ENCODE measurements at regions of chr17 and their contacts with region 1.

Region 1: GRCh38 chr17:49434821-49435670 is 20.4 kb upstream of the PHB1 start:
- DNase-seq: peak; percentile 92
- H3K4me3 ChIP-seq: no peak overlapping the region
- H3K27ac ChIP-seq: peak overlapping the region in 1 of 2 experiments; percentile 81; a peak in 2 of 4 replicates
- H3K4me1 ChIP-seq: peaks cover 3 to 39% of the 10 kb centered on the region in 2 experiments; a peak in 2 of 4 replicates
- H3K27me3 ChIP-seq: peaks cover 16% of the 10 kb centered on the region; the same call in 1 of the 2 replicates
- CTCF ChIP-seq: peak; percentile 77
- EP300 ChIP-seq: no peak
- RAD21 ChIP-seq: peak; percentile 86

Region 2: GRCh38 chr17:49146620-49147306 is 288.3 kb before region 1 on chr17:
- CTCF ChIA-PET with region 1: no interaction called
- POLR2A ChIA-PET with region 1: no interaction called
- DNase-seq: no peak
- H3K4me3 ChIP-seq: no peak overlapping the region
- H3K27ac ChIP-seq: peak overlapping the region in 1 of 2 experiments; percentile 73; a peak in 2 of 4 replicates
- H3K4me1 ChIP-seq: peaks cover 0 to 9% of the 10 kb centered on the region in 2 experiments; a peak in 1 of 4 replicates
- H3K27me3 ChIP-seq: peaks cover 34% of the 10 kb centered on the region
- CTCF ChIP-seq: no peak
- EP300 ChIP-seq: peak in 1 of 2 experiments; percentile 85; a peak in 2 of 4 replicates
- RAD21 ChIP-seq: no peak

Region 3: GRCh38 chr17:49315551-49316257 is 119.3 kb before region 1 on chr17:
- CTCF ChIA-PET with region 1: interaction called, 17 read pairs
- POLR2A ChIA-PET with region 1: no interaction called
- DNase-seq: peak; percentile 77
- H3K4me3 ChIP-seq: peak overlapping the region in 1 of 2 experiments; percentile 9; a peak in 1 of 4 replicates
- H3K27ac ChIP-seq: peak overlapping the region; percentile 11 to 59; a peak in 3 of 4 replicates
- H3K4me1 ChIP-seq: peaks cover 0 to 8% of the 10 kb centered on the region in 2 experiments
- H3K27me3 ChIP-seq: no peaks in the 10 kb centered on the region
- CTCF ChIP-seq: peak; percentile 100
- EP300 ChIP-seq: peak in 1 of 2 experiments; percentile 32; a peak in 1 of 4 replicates
- RAD21 ChIP-seq: peak; percentile 100

Region 4: GRCh38 chr17:49382556-49382955 is 52.5 kb before region 1 on chr17:
- CTCF ChIA-PET with region 1: no interaction called
- POLR2A ChIA-PET with region 1: no interaction called
- DNase-seq: no peak
- H3K4me3 ChIP-seq: no peak overlapping the region
- H3K27ac ChIP-seq: no peak overlapping the region
- H3K4me1 ChIP-seq: peaks cover 0 to 10% of the 10 kb centered on the region in 2 experiments; a peak in 1 of 4 replicates
- H3K27me3 ChIP-seq: no peaks in the 10 kb centered on the region
- CTCF ChIP-seq: no peak
- EP300 ChIP-seq: no peak
- RAD21 ChIP-seq: no peak

Region 5: DNA sequence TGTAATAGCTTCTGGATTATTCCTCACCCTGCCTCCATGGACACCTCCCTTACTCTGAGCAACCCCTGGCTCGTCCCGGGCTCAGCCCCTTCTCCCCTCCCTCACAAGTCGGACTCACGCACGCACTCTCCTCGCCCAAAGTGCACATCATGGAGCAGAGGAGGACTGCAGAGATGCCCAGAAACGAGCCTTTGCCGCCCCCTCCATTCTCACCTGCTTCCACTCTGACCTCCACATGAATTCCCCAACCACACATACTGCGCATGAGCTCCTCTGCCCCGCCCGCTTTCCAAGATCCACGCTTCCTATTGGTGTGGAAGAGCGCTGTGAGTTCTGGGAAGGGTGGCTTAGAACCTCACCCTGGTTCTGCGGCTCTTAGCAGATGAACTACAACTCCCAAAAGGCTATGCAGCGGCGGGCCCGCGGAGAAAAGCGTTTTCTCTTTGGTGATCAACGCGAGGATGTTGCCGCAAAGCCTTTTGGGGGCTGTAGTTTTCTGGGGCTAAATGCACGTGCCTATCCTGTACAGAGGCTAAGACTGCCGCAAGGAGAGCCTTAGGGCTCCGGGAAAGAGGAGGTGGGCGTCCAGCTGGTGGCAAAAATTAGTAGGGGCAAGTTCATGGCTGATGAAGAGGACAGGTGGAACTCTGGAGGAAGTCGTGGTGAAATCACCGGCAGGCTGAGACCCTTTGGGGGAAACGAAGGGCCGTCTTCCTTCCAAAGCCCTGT is 20.3 kb before region 1 on chr17 and contains the start of gene PHB1:
- CTCF ChIA-PET with region 1: interaction called, 64 read pairs
- POLR2A ChIA-PET with region 1: no interaction called
- DNase-seq: peak; percentile 97
- H3K4me3 ChIP-seq: peak within 1 kb of the TSS; percentile 86 to 87
- H3K27ac ChIP-seq: peak within 1 kb of the TSS in 1 of 2 experiments; percentile 48; a peak in 1 of 4 replicates
- H3K4me1 ChIP-seq: peaks cover 0 to 11% of the 10 kb centered on the region in 2 experiments; a peak in 2 of 4 replicates
- H3K27me3 ChIP-seq: no peaks in the 10 kb centered on the region
- CTCF ChIP-seq: no peak
- EP300 ChIP-seq: no peak
- RAD21 ChIP-seq: no peak
- polyA plus RNA-seq, gene PHB1: 379 and 477 TPM in 2 replicates

Region 6: DNA sequence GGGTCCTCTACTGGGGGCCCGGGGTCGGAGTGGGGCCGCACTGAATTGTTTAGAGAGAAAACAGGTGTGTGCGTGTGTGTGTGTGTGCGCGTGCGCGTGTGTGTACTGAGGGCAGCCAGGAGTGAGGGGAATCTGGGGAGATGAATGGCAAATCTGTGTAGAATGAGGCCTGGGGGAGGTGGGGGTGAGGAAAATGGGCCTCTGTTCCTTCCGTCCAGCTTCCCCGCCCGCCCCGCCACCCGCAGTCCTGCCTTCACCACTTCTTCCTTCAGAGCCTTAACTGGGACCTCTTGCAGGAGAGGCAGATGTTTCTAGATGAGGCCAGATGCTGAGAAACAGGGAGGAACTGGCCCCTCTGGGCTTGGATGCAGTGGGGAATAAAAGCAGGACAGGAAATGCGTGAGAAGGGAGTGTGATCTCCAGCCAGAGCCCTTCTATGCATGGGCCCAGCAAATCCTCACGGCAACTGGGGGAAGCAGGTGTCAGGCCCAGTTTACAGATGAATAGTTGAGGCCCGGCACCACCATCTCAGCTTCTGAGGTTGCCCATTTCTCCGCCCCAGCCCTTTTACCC is 30.4 kb after region 1 on chr17:
- CTCF ChIA-PET with region 1: interaction called, 31 read pairs
- POLR2A ChIA-PET with region 1: no interaction called
- DNase-seq: no peak
- H3K4me3 ChIP-seq: no peak overlapping the region
- H3K27ac ChIP-seq: no peak overlapping the region
- H3K4me1 ChIP-seq: no peaks in the 10 kb centered on the region; a peak in 1 of 4 replicates
- H3K27me3 ChIP-seq: peaks cover 75% of the 10 kb centered on the region
- CTCF ChIP-seq: no peak
- EP300 ChIP-seq: no peak
- RAD21 ChIP-seq: no peak

Region 7: DNA sequence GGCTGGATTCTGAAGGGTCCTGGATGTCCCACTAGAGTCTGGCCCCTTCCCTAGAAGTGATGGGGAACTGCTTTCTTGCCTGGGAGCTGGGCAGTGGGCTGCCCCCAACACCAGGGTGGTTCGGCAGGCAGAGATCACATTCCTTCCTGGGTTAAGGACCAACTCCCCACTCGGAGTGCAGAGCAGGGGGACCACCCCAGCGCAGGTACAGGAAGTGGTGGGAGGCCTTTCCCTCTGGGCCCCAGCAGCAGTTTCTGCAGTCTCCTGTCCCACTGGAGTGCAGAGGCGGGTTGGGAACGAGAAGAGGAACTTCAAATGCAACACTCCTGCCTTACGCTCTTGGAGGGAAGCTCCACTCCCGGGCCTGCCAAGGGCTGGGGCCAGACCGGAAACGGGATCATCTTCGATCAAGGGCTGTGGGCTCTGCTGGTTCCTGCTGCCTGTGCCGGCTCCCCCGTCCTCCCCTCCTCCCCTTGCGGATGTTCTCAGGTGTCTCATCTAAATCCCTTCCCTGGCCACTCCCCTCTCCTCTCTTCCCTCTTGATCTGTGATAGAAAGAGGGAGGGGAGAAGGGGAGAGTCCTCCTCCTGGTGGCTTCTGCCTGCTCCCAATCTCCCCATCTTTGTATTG is 51.1 kb after region 1 on chr17:
- CTCF ChIA-PET with region 1: interaction called, 53 read pairs
- POLR2A ChIA-PET with region 1: interaction called, 3 read pairs
- DNase-seq: no peak
- H3K4me3 ChIP-seq: no peak overlapping the region
- H3K27ac ChIP-seq: no peak overlapping the region
- H3K4me1 ChIP-seq: peaks cover 0 to 28% of the 10 kb centered on the region in 2 experiments; a peak in 1 of 4 replicates
- H3K27me3 ChIP-seq: peaks cover 76% of the 10 kb centered on the region
- CTCF ChIP-seq: no peak
- EP300 ChIP-seq: no peak
- RAD21 ChIP-seq: no peak

Region 8: DNA sequence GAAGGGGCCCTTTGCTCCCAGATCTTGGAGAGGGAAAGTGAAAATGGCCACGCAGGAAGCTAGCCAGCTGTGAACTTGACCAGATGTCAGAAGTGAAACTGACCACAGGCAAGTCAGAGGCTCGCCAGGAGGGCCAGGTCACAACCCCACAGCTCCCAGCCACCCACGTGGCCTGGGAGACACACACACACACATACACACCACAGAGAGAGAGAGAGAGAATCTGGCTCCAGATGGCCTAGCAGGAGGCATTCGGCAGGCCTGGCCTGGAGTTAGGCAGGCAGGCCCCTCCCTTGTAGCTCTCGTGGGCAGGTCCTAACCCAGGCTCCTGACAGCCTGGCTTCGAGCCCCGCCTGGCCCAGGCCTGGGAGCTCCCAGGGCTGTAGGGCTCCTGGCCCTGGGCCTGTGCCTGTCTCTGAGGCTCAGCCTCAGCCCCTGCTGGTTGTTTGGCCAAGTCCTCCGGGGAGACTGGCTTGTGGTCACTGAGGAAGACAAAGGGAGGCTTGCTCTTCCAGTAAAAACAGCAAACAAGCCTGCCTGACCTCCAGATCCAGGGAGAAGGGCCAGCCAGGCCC is 80.2 kb after region 1 on chr17:
- CTCF ChIA-PET with region 1: interaction called, 38 read pairs
- POLR2A ChIA-PET with region 1: interaction called, 5 read pairs
- DNase-seq: peak; percentile 97
- H3K4me3 ChIP-seq: no peak overlapping the region
- H3K27ac ChIP-seq: peak overlapping the region; percentile 15 to 99; a peak in 3 of 4 replicates
- H3K4me1 ChIP-seq: peaks cover 7 to 76% of the 10 kb centered on the region in 2 experiments
- H3K27me3 ChIP-seq: peaks cover 2% of the 10 kb centered on the region; the same call in 1 of the 2 replicates
- CTCF ChIP-seq: no peak
- EP300 ChIP-seq: peak in 1 of 2 experiments; percentile 94; a peak in 2 of 4 replicates
- RAD21 ChIP-seq: peak; percentile 46; the same call in 1 of the 2 replicates

Region 9: DNA sequence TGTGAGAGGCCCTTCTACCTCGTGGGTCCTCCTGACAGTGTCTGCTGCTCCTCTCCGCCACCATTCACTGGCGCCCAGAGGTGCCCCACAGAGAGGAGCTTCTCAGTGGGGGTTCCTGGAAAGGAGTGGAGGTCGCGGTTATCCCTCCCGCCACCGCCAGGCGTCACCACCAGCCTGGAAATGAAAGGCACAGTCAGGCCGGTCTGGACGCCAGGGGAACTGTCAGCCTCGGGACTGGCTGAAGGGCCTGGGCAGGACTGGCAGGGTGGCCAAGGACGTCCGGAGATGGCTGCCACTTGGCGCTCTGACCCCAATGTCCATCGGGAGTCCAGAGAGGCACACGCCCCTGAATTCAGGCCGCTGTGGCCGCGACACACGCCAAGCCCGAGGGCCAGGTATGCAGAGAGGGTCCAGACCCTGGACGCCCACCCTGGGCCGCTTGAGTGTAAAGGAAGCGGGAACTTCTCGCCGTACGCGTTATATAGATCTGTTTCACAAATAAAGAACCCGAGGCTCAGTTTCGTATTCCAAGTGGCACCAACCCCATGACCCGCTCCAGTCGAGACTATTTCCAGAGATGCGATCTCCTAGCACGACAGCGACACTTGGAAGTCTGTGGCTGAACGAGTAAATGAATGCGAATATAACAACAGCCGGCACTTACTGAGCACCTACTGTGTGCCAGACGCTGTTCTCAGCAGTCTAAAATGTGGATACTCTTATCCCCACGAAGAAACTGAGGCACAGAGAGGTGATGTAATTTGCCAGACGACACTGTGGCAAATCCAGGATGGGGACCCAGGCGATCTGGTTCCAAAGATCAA is 133.0 kb after region 1 on chr17:
- CTCF ChIA-PET with region 1: interaction called, 17 read pairs
- POLR2A ChIA-PET with region 1: no interaction called
- DNase-seq: peak; percentile 92
- H3K4me3 ChIP-seq: peak overlapping the region; percentile 40 to 56
- H3K27ac ChIP-seq: no peak overlapping the region
- H3K4me1 ChIP-seq: peaks cover 0 to 14% of the 10 kb centered on the region in 2 experiments; a peak in 1 of 4 replicates
- H3K27me3 ChIP-seq: peaks cover 61% of the 10 kb centered on the region
- CTCF ChIP-seq: peak; percentile 99
- EP300 ChIP-seq: no peak
- RAD21 ChIP-seq: peak; percentile 99